ENCODE measurements at regions of chr12 and their contacts with region 1.

Region 1: DNA sequence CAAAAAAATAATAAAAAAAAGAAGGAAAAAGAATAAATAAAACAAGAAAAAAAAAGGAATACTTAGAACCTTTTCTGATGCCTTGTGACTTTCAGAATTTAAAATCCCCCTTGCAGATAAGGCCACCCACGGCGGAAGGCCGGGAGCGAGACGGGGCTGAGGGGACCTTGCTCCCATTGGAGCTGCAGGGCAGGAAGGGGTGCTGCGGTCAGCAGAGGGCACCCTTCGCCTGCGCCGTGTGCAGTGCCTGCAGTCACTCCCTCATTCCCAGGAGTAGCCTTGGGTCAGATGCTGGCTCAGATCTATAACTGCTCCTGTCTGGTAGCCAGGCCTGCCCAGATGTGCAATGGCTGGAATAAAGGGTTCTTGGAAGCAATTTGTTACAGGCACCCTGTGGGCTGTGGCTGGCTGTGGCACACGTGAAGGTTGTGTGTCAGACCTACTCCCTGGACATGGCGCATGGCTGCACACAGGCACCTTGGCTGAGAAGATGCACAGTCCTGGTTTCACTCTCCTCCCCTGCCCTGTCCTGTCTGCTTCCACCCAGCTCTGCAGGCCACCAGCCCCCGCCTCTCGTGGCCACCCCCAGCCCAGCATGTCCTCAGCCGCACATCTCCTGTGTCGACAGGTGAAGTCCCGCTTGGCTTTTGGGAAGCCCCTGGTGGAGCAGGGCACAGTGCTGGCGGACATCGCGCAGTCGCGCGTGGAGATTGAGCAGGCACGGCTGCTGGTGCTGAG is 13.4 kb upstream of the ALDH2 start:
- DNase-seq: no peak
- H3K4me3 ChIP-seq: no peak overlapping the region
- H3K27ac ChIP-seq: no peak overlapping the region
- H3K4me1 ChIP-seq: peaks cover 11% of the 10 kb centered on the region
- H3K27me3 ChIP-seq: no peaks in the 10 kb centered on the region
- CTCF ChIP-seq: peak; percentile 50 to 86 (median 75)
- POLR2A ChIP-seq: no peak

Region 2: DNA sequence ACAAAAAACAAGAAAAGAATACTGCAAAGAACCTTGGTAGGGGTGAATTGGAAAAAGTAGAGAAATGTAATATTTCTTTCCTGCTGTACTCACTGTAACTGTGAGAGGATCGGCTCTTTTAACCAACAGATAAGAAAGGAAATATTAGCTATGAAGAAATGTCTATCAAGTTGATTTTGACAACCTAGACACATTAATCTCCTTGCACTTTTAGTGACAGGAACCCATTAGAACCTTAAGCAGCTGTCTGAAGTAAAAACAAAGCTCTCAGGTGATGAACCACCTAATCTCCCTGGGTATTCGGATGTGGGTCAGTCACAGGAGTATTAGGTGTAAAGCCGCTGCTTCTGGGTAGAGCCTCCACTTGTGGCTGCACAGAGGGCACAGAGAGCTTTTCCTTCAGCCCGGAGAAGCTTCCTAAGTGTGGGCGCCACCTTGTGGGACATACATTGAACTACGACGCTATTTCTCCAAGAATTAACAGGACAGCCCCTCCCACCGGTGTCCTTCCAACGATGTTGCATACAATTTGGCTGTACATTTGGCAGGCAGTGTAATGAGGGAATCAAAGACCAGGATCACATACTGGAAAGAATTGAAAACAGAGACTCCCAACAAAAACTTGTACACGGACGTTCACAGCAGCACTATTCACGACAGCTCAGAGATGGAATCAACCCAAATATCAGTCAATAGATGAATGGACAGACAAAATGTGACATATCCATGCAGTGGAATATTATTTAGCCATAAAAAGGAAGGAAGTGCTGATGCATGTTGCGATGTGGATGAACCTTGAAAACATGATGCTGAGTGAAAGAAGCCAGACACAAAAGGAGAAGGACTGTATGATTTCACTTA is 59.8 kb after region 1 on chr12:
- intact Hi-C with region 1: loop called (anchors 5 kb)
- DNase-seq: peak in 1 of 2 donors; percentile 89
- H3K4me3 ChIP-seq: no peak overlapping the region
- H3K27ac ChIP-seq: no peak overlapping the region
- H3K4me1 ChIP-seq: no peaks in the 10 kb centered on the region
- H3K27me3 ChIP-seq: no peaks in the 10 kb centered on the region
- CTCF ChIP-seq: peak; percentile 69 to 93 (median 92)
- POLR2A ChIP-seq: no peak